ENCODE measurements at regions of chr6 and their contacts with region 1.

Region 1: DNA sequence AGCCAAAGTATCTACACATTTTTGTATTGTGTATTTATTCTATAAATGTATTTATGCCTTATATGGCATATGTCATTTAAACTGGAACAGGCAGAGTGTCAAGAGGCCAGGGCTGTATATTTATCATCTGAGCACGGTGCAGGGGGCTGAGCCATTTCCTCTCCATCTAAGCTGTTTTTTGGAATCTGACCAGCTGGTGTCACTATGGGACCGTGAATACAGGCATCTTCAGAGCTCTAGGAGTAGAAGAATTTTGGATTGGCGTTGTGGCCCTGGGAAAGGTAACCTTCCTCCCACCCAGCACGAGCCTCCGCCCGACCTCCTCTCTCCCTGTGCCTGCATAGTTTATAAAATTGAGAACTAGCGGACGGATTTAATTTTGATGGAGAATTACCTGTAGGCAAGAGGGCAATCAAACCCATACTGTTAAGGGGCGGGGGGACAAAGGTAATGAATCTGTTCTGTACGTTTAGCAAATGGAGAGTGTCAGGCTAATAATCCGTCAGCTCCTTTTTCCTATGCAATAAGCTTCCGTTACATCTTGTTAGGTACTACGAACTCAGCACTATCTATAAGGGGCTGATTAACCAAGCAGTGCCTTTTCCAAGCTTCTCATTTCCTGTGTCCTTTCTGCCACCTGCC is 29.0 kb upstream of the EEF1E1 start:
- DNase-seq: peak in 1 of 2 donors; percentile 49
- ATAC-seq: peak; percentile 48
- H3K4me3 ChIP-seq: no peak overlapping the region
- H3K27ac ChIP-seq: no peak overlapping the region
- H3K4me1 ChIP-seq: no peaks in the 10 kb centered on the region
- H3K27me3 ChIP-seq: no peaks in the 10 kb centered on the region

Region 2: GRCh38 chr6:8043221-8043620 is 88.2 kb before region 1 on chr6:
- intact Hi-C with region 1: no loop called
- DNase-seq: no peak
- ATAC-seq: no peak
- H3K4me3 ChIP-seq: no peak overlapping the region
- H3K27ac ChIP-seq: no peak overlapping the region
- H3K4me1 ChIP-seq: no peaks in the 10 kb centered on the region
- H3K27me3 ChIP-seq: no peaks in the 10 kb centered on the region

Region 3: DNA sequence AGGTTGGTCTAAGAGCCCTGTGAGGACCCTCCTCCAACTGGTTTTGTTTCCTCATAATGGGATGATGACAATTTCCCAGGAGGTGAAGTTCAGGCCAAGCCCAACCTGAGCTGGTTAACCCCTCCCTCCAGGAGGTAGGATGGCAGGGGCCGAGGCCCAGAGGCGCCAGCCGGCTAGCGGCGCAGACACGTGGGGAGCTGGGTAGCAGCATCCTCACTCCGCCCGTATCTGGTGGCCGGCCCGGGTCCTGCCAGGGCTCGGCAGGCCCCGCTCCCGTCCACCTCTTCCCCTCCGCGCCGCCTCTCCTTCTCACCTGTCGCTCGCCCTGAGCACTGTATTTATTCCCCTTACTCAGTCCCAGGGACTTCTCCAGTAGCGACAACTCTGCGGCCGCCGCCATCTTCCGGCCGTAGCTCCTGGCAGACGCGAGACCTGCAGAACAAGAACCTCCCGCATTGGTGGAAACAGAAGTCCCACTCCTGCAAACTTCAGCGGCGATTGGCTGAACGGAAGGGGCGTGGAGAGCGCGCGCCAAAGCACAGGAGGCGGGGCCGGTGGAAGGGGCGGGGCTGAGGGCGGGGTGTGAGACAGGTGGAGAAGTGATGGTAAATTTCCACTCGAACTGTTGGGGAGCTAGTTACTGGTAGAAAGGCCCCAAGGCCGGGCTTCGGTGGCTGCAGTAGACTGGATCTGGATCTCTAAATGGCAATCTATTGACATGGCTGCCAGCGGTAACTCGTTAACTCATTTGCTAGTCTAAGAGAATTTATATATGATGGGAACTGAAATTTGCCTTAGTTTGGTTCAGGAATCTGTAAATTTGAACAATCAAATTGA is 29.0 kb before region 1 on chr6 and contains the start of gene EEF1E1:
- intact Hi-C with region 1: no loop called
- DNase-seq: peak; percentile 95 to 98
- ATAC-seq: peak; percentile 98
- H3K4me3 ChIP-seq: peak within 1 kb of the TSS; percentile 51 to 83
- H3K27ac ChIP-seq: peak within 1 kb of the TSS in 1 of 2 donors; percentile 31
- H3K4me1 ChIP-seq: peaks cover 0 to 2% of the 10 kb centered on the region in 2 donors
- H3K27me3 ChIP-seq: no peaks in the 10 kb centered on the region
- total RNA-seq, gene EEF1E1: 17.1 to 17.9 TPM

Region 4: GRCh38 chr6:8219352-8219943 is 88.1 kb after region 1 on chr6:
- intact Hi-C with region 1: loop called (anchors 1 to 2 kb)
- DNase-seq: no peak
- ATAC-seq: no peak
- H3K4me3 ChIP-seq: no peak overlapping the region
- H3K27ac ChIP-seq: no peak overlapping the region
- H3K4me1 ChIP-seq: no peaks in the 10 kb centered on the region
- H3K27me3 ChIP-seq: no peaks in the 10 kb centered on the region

Region 5: DNA sequence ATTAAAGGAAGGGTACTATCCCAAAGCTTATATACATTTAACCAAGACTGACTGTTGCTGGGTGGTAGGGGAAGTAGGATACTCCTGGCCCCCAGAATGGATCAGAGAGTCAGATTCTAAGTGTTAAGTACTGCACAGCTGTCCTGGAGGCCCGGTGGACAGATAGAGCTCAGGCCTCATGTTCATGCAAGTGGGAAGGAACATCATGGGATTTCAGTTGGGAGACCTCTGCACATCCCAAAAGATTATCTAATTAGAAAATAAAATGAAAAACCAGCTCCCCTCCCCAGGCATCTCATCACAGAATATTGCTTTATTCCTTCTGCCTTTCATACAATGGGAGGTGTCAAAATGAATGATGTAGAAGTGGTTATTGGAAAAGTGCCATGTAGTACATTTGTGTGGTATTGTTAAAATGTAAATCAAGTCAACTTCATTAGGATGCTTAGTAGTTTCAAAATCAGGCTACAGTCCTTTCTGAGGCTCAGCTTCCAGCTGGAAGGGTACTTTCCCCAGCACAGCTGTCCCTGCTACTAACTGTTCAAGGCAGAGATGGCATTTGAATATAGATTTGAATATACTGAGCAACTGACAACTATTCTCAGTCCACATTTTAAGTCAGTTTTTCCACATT is 221.1 kb after region 1 on chr6:
- intact Hi-C with region 1: no loop called
- DNase-seq: no peak
- ATAC-seq: no peak
- H3K4me3 ChIP-seq: no peak overlapping the region
- H3K27ac ChIP-seq: no peak overlapping the region
- H3K4me1 ChIP-seq: no peaks in the 10 kb centered on the region
- H3K27me3 ChIP-seq: no peaks in the 10 kb centered on the region